Calu3 (cell line): ENCODE measurements at regions of chr18 and their contacts with region 1.

Region 1: DNA sequence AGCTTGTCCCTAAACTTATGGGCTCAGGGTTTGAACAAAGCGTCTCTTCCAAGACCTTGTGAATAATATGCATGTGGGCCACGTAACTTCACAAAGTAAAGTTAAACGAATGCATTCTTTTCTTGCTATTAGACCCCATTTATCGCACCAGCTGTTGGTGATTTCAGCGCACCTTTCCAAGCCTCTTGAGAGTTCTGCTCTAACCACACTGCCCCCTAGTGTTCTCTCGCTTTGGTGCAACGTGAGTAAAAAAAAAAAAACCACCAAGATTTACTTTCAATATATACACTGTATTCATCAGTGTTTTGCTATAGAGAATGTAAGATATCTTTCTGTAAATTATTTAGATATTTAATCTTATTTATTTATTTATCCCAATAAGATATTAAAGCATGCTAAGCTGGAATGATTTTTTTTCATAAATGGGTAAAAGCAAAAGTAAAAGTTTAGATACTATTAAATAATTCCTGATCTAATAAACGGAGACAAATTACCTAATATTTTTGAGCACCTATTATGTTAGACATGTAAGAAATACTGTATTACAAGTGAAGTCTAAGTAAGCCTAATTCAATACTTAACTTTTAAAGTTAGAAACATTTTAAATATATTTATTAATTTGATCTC is 459.5 kb downstream of the DLGAP1 start:
- DNase-seq: peak; percentile 64
- H3K4me3 Mint-ChIP-seq: no peak overlapping the region
- H3K27ac Mint-ChIP-seq: no peak overlapping the region
- H3K4me1 Mint-ChIP-seq: no peaks in the 10 kb centered on the region
- H3K27me3 Mint-ChIP-seq: no peaks in the 10 kb centered on the region
- CTCF ChIP-seq: peak; percentile 86

Region 2: DNA sequence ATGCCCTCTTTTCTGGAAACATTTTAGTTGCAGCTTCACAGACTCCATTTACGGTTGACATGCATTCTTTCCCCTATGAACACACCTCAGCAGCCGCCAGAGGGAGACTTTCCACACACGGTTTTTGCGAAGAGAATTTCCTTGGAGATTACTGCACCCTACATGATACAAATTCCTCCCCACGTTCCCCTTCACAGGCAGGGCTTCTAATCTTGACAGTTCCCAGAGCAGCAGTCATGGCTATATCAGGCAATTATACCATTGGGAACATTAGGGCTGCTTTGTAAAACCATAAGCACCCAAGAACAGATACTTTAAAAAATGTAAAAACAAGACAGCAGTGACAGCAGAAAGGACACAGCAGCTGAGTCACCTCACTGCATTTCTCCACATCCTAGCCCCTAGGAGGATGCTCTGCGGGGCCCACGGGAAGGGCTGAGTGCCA is 291.8 kb before region 1 on chr18:
- CTCF ChIA-PET with region 1: interaction called, 5 read pairs
- intact Hi-C with region 1: loop called (anchors 1 kb)
- DNase-seq: peak; percentile 74
- H3K4me3 Mint-ChIP-seq: no peak overlapping the region
- H3K27ac Mint-ChIP-seq: no peak overlapping the region
- H3K4me1 Mint-ChIP-seq: peaks cover 35% of the 10 kb centered on the region
- H3K27me3 Mint-ChIP-seq: no peaks in the 10 kb centered on the region
- CTCF ChIP-seq: peak; percentile 72

Region 3: DNA sequence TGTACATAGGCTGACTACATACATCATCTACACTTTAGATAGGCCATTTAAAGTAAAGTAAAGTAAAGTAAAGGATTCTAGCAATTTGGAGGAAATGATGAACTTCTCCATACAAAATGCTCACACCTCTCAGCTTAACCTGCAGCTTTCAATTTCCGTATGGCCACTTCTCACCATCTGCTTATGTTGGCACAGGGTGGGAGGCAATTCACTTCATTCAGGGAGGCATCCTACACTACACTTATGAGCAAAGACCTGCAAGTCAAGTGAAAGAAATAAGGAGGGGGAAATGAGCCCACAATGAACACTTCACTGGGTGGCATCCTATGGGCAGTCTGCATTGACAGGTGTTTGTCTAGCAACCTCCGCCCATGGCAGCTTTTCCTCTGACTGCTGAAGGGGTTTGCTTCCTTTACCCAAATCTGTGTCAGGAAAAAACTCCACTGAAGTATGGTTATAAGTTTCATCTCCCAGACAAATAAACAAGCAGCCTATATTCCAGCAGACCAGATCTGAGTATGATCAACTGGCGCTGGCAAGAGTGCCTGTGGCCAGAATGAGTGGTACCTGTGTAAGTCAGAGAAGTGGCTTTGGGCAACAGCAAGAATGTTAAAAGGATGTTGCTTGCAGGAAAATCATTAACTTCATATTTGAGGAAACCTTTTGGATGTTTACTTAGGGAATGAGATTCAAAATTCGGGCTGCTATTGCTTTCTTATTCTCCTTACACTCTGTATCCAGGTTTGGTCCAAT is 96.6 kb before region 1 on chr18:
- CTCF ChIA-PET with region 1: no interaction called
- intact Hi-C with region 1: no loop called
- DNase-seq: no peak
- H3K4me3 Mint-ChIP-seq: no peak overlapping the region
- H3K27ac Mint-ChIP-seq: no peak overlapping the region
- H3K4me1 Mint-ChIP-seq: peaks cover 8% of the 10 kb centered on the region
- H3K27me3 Mint-ChIP-seq: peaks cover 29% of the 10 kb centered on the region
- CTCF ChIP-seq: no peak

Region 4: DNA sequence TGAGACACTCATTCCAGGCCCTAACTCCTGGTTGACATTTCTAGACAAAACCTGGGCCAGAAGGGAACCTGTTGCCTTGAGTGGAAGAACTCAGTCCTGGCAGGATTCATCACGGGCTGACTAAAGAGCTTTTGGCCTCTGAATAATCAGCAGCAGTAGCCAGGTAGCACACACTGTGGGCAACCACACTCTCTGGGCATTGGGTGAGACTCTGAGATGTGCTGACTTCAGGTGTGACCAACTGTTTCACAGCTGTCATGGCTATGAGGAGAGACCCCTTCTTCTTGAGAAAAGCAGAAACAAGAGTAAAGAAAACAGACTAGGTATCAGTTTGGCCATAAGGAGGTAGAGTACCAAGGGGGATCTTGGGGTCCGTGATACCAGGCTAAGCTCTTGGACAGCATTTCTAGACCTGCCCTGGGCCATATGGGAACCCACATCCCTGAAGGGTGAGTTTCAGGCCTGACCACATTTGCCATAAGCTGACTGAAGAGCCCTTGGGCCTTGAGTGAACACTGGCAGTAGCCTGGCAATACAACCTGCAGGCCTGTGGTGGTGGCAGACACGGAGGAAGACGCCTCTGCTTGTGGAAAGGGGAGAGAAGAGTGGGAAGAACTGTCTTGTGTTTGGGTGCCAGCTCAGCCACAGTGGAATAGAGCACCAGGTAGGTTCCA is 228.6 kb after region 1 on chr18:
- CTCF ChIA-PET with region 1: no interaction called
- intact Hi-C with region 1: no loop called
- DNase-seq: no peak
- H3K4me3 Mint-ChIP-seq: no peak overlapping the region
- H3K27ac Mint-ChIP-seq: no peak overlapping the region
- H3K4me1 Mint-ChIP-seq: no peaks in the 10 kb centered on the region
- H3K27me3 Mint-ChIP-seq: peaks cover 15% of the 10 kb centered on the region
- CTCF ChIP-seq: no peak